ENCODE measurements at regions of chr11 and their contacts with region 1.

Region 1: DNA sequence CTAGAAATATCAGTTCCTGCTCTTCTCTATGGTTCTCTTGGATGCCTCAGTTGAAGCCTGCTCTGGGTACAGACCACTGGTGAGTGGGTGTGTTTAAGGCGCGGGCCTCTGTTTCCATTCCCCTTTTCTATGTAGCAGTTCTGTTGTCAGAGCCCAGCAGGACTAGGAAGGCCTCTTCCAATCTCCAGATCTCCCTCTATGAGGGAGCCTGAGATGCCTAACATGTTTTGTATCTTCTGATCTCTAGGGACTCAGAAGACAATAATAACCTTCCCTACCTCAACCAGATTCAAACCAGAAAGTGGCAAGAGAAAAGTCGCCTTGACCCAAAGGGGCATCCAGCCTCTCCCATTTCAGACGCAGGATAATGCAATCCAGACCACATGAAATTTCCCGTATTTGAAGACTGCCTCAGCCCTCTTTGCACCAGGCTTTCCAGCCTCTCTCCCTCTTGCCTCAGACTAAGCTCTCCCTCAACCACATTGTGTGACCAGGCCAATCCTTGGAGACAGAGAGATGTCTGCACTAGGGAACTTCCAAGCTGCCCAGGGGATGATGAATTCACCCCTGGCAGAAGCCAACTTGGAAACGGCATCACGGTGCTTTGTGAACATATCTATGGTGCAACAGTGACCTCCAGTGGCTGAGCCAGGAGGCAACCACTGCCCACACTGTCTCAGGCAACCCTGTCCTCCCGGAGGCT is 150.1 kb upstream of the UBASH3B start:
- DNase-seq: peak; percentile 94

Region 2: DNA sequence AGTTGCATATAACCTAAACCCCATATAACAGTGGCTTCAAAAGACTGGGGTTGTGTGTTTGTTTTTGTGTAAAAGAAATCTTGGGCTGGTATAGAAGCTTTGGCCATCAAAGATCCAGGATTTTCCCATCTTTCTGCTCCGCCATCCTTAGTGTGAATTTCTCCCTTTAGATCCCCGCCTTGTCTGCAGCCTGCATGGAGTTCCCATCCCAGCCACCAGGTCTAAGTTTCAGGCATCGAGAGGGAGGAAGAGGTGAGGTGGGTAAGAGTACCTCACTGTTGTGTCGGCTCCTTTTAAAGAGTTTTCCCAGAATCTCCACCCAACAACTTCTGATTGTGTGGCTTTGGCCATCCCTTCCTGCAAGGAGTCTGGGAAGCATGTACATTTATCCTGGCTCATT is 857.1 kb before region 1 on chr11:
- intact Hi-C with region 1: loop called (anchors 5 kb)
- DNase-seq: no peak

Region 3: DNA sequence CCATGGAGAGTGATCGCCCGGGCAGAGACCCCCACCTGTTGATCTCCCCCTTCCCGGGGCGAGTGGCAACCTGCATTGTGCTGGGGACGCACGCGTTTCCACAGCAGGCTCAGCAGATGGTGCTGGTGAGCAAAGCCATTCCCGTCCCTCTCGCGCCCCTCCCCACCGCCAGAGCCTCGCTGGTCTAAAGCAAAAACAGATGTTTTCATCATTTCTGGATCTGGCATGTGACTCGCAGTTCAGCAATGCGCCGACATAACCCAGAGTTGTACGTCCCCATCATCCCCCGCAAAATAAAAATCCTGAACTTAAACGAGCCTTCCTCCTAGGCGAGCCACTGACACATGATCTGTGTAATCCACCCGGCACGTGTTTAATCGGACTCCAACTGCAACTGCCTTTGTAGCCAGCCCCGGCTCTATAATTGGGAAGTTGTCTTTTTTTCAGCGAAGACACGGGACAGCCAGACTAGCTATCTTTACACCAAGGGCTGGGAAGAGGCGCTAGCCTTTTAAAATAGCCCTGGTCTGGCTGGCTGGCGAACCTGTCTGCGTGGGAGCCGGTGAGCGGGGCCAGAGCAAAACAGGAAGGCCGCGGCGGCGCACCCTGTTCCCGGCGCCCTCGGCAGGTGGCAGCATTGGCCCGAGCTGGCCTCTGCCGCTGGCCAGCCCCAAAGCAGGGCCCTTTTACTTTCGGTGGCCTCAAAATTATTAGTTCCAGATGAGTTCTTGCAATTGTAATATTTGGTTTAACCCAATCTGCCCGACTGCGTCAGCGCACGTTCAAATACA is 849.7 kb before region 1 on chr11:
- intact Hi-C with region 1: loop called in 1 of 2 experiments (anchors 5 kb)
- DNase-seq: peak; percentile 97

Region 4: GRCh38 chr11:122215244-122215992 is 290.0 kb before region 1 on chr11:
- intact Hi-C with region 1: loop called (anchors 2 to 5 kb)
- DNase-seq: peak; percentile 95

Measured in posterior vena cava (tissue), 2 donors.